ENCODE measurements at regions of chr5 and their contacts with region 1.

Region 1: GRCh38 chr5:177454397-177455035 is 7.9 kb downstream of the PRR7 start:
- DNase-seq: peak; percentile 94
- ATAC-seq: peak; percentile 50
- H3K4me3 Mint-ChIP-seq: peak overlapping the region; percentile 78
- H3K27ac Mint-ChIP-seq: peak overlapping the region; percentile 75
- H3K4me1 Mint-ChIP-seq: peaks cover 30% of the 10 kb centered on the region
- H3K27me3 Mint-ChIP-seq: peaks cover 3% of the 10 kb centered on the region

Region 2: GRCh38 chr5:177317959-177318377 is 136.5 kb before region 1 on chr5:
- CTCF ChIA-PET with region 1: interaction called, 17 read pairs
- POLR2A ChIA-PET with region 1: no interaction called
- DNase-seq: peak; percentile 84
- ATAC-seq: peak; percentile 67
- H3K4me3 Mint-ChIP-seq: no peak overlapping the region
- H3K27ac Mint-ChIP-seq: no peak overlapping the region
- H3K4me1 Mint-ChIP-seq: peaks cover 44% of the 10 kb centered on the region
- H3K27me3 Mint-ChIP-seq: no peaks in the 10 kb centered on the region

Region 3: DNA sequence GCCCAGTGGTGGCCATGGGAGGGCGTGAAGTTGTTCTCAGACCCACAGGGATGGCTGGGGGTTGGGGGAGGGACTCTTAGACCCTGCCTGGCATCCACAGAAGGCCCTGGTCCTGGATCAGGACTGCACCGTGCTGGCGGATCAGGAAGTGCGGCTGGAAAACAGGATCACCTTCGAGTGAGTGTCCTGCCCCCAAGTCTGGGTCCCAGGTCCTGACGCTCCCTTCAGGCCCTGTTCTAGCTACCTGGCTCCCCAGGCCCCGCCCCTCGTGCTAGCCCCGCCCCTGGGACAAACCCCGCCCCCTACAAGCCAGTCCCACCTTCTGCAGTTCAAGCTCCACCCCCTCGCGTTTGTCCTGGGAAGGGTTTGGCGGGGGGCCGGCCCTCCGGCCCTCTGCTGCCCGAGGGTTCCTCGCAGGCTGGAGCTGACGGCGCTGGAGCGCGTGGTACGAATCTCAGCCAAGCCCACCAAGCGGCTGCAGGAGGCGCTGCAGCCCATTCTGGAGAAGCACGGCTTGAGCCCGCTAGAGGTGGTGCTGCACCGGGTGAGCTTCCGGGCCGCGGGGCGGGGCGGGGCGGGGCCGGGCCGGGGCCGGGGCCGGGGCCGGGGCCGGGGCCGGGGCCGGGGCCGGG is 83.9 kb before region 1 on chr5:
- CTCF ChIA-PET with region 1: interaction called, 15 read pairs
- POLR2A ChIA-PET with region 1: no interaction called
- DNase-seq: peak; percentile 63
- ATAC-seq: peak; percentile 62
- H3K4me3 Mint-ChIP-seq: peak overlapping the region; percentile 31
- H3K27ac Mint-ChIP-seq: no peak overlapping the region
- H3K4me1 Mint-ChIP-seq: peaks cover 70% of the 10 kb centered on the region
- H3K27me3 Mint-ChIP-seq: no peaks in the 10 kb centered on the region

Region 4: DNA sequence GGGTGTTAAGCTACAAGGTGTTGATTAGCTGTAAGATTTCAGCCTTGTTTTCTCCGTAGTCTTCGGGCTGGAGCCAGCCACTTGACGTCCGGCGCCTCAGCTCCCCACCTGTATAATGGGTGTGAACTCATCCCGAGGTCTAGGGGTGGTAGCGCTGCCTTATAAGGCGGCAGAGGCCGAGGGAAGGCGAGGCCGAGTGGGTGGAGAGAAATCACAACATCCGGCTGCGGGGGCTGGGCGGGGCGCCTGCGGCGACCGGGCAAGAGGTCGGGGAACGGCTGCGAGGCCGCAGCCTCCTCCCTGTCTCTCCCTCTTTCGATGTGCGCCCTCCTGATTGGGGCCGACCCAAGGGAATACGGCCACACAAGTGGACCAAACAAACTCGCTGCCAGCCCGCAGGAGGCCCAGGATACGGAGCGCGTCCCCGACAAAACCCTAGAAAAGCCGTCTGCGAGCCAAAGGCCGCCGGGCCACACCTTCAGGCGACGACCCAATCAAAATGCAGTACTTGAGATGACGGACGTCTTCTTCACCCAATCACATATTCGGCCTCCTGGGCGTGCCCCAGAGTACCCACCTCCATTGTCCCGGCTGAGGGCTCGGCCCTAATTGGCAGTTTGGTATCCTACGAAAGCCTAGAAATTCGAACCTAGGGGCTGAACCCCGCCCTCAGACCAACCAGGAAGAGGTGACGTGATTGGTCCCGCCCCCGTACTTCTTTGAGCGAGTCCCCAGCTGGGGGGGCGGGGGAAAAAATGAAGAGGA is 28.5 kb before region 1 on chr5:
- CTCF ChIA-PET with region 1: interaction called, 99 read pairs
- POLR2A ChIA-PET with region 1: interaction called, 245 read pairs
- DNase-seq: peak; percentile 100
- ATAC-seq: peak; percentile 86
- H3K4me3 Mint-ChIP-seq: peak overlapping the region; percentile 91
- H3K27ac Mint-ChIP-seq: peak overlapping the region; percentile 93
- H3K4me1 Mint-ChIP-seq: peaks cover 52% of the 10 kb centered on the region
- H3K27me3 Mint-ChIP-seq: no peaks in the 10 kb centered on the region

Region 5: DNA sequence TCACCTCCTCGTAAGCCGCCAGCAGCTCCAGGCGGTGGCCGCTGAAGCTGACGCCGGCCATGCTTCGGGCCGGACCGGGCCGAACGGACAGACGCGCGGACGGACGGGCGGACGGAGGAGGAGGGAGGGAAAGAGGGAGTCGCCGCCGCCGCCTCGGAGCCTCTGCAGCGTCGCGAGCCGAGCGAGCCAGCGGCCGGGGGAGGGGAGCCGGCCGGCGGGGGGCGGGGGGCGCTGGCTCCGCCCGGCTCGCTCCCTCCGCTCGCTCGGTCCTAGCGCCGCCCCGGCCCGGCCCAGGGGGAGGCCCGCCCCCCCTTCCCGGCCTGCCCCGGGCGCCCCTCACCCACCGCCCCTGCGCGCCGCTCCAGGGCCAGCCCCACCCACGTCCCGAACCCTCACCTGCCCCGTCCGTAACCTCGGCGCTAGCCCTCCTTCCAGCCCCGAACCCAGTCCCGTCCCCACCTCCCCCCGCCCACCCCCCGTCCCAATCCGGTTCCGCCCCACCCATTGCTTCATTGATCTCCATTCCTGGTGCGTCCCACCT is 19.0 kb after region 1 on chr5 and contains the start of gene DBN1:
- CTCF ChIA-PET with region 1: interaction called, 45 read pairs
- POLR2A ChIA-PET with region 1: interaction called, 5 read pairs
- DNase-seq: peak; percentile 51
- ATAC-seq: peak; percentile 27
- H3K4me3 Mint-ChIP-seq: peak within 1 kb of the TSS; percentile 80
- H3K27ac Mint-ChIP-seq: peak within 1 kb of the TSS; percentile 83
- H3K4me1 Mint-ChIP-seq: peaks cover 76% of the 10 kb centered on the region
- H3K27me3 Mint-ChIP-seq: peaks cover 4% of the 10 kb centered on the region
- total RNA-seq, gene DBN1: 92.9 to 104 TPM

Measured in activated CD8-positive, alpha-beta T cell treated with anti-CD3 and anti-CD28 coated beads, Interleukin-2, amount 10 ng/mL, durations not matched to agents 7 days and 5 days (primary cell).